SK-N-SH (cell line): ENCODE measurements at regions of chr9 and their contacts with region 1.

Region 1: GRCh38 chr9:130290291-130291181 is 25.0 kb downstream of the HMCN2 start:
- DNase-seq: no peak
- H3K4me3 ChIP-seq: no peak overlapping the region
- H3K27ac ChIP-seq: peak overlapping the region in 1 of 2 experiments; percentile 67; a peak in 2 of 4 replicates
- H3K4me1 ChIP-seq: peaks cover 0 to 30% of the 10 kb centered on the region in 2 experiments; a peak in 2 of 4 replicates
- H3K27me3 ChIP-seq: peaks cover 18% of the 10 kb centered on the region; the same call in 1 of the 2 replicates
- CTCF ChIP-seq: no peak
- EP300 ChIP-seq: no peak
- RAD21 ChIP-seq: no peak

Region 2: GRCh38 chr9:130301483-130302286 is 11.1 kb after region 1 on chr9:
- CTCF ChIA-PET with region 1: interaction called, 15 read pairs
- POLR2A ChIA-PET with region 1: no interaction called
- DNase-seq: peak; percentile 59
- H3K4me3 ChIP-seq: no peak overlapping the region
- H3K27ac ChIP-seq: no peak overlapping the region
- H3K4me1 ChIP-seq: peaks cover 0 to 41% of the 10 kb centered on the region in 2 experiments; a peak in 2 of 4 replicates
- H3K27me3 ChIP-seq: no peaks in the 10 kb centered on the region
- CTCF ChIP-seq: no peak
- EP300 ChIP-seq: no peak
- RAD21 ChIP-seq: no peak